ENCODE measurements at regions of chr1 and their contacts with region 1.

Region 1: DNA sequence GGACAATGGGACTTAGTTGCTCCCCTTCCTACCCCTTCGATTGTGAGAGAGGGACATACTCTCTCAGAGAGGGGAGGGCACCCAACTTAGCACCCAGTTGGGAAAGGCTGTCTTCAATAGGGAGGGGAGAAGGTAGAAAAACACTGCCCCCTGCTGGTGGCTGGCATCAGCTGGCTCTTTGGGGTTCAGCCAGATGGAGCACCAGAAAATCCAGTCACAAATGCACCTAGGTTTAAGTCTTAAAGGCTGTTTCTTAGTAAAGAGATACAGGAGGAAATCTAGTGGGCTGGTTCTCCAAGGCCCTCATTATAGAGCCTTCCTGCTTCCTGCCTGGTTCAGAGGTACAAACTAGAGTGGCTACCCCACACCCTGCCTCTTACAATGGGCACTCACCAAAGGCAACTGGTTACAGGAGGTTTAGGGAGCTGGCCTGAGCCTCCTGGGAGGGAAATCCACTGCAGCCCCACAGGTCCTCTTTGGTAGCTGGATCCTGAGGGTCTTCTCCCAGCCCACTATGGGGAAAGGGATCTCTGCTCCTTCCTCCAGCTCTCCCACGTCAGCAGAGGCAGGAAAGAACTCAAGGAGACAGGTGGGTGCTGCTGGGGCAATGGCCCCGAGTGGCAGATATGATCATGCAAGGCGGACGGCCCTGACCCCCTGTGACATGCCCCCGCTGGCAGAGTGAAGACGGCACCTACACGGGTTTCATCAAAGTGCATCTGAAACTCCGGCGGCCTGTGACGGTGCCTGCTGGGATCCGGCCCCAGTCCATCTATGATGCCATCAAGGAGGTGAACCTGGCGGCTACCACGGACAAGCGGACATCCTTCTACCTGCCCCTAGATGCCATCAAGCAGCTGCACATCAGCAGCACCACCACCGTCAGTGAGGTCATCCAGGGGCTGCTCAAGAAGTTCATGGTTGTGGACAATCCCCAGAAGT is 28.3 kb downstream of the EIF2D start:
- DNase-seq: peak; percentile 77
- CTCF ChIP-seq: peak; percentile 83

Region 2: GRCh38 chr1:206479183-206480125 is 104.5 kb before region 1 on chr1:
- CTCF ChIA-PET with region 1: interaction called, 130 read pairs
- POLR2A ChIA-PET with region 1: no interaction called
- DNase-seq: peak; percentile 85
- CTCF ChIP-seq: peak; percentile 74

Region 3: GRCh38 chr1:206507284-206508129 is 76.5 kb before region 1 on chr1 and contains the start of gene RASSF5:
- CTCF ChIA-PET with region 1: interaction called, 15 read pairs
- POLR2A ChIA-PET with region 1: interaction called, 3 read pairs
- DNase-seq: peak; percentile 90
- CTCF ChIP-seq: no peak

Region 4: GRCh38 chr1:206551986-206552326 is 32.0 kb before region 1 on chr1:
- CTCF ChIA-PET with region 1: interaction called, 191 read pairs
- POLR2A ChIA-PET with region 1: interaction called, 5 read pairs
- DNase-seq: no peak
- CTCF ChIP-seq: no peak

Region 5: GRCh38 chr1:206600527-206600926 is 16.5 kb after region 1 on chr1:
- CTCF ChIA-PET with region 1: interaction called, 46 read pairs
- POLR2A ChIA-PET with region 1: no interaction called
- DNase-seq: no peak
- CTCF ChIP-seq: no peak

Region 6: GRCh38 chr1:206734499-206735142 is 150.6 kb after region 1 on chr1:
- CTCF ChIA-PET with region 1: no interaction called
- POLR2A ChIA-PET with region 1: no interaction called
- DNase-seq: peak; percentile 73
- CTCF ChIP-seq: peak; percentile 77